ENCODE measurements at regions of chr4 and their contacts with region 1.

Region 1: GRCh38 chr4:151356510-151356909 is 31.1 kb upstream of the SH3D19 start:
- DNase-seq: peak; percentile 63
- H3K4me3 ChIP-seq: no peak overlapping the region
- H3K27ac ChIP-seq: no peak overlapping the region
- H3K4me1 ChIP-seq: peaks cover 20% of the 10 kb centered on the region
- H3K27me3 ChIP-seq: no peaks in the 10 kb centered on the region
- CTCF ChIP-seq: no peak

Region 2: DNA sequence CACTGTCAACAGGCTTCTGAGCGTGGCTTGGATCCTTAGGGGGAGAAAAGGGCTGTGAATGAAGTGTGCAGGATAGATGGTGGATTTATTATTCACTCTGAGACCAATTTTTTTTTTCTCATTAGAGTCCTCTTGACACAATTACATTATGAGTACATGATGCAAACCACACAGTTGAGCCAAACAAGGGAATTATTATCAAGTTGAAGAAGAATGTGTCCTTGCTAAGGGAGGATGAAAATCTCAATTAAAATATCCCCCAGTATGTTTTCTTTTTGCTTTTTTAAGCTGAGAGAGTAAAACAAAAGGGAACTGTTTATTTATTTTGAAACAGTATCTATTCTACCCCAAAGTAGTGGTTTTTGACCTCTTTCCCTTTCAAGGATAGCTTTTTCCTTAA is 216.7 kb before region 1 on chr4:
- CTCF ChIA-PET with region 1: no interaction called
- dilution Hi-C with region 1: no loop called
- in situ Hi-C with region 1: loop called in 1 of 2 experiments (anchors 25 kb)
- intact Hi-C with region 1: loop called (anchors 5 kb)
- DNase-seq: no peak
- H3K4me3 ChIP-seq: no peak overlapping the region
- H3K27ac ChIP-seq: no peak overlapping the region
- H3K4me1 ChIP-seq: no peaks in the 10 kb centered on the region
- H3K27me3 ChIP-seq: no peaks in the 10 kb centered on the region
- CTCF ChIP-seq: no peak

Region 3: GRCh38 chr4:151310124-151310728 is 46.3 kb before region 1 on chr4:
- CTCF ChIA-PET with region 1: no interaction called
- dilution Hi-C with region 1: no loop called
- in situ Hi-C with region 1: no loop called
- intact Hi-C with region 1: no loop called
- DNase-seq: no peak
- H3K4me3 ChIP-seq: no peak overlapping the region
- H3K27ac ChIP-seq: no peak overlapping the region
- H3K4me1 ChIP-seq: peaks cover 23% of the 10 kb centered on the region
- H3K27me3 ChIP-seq: no peaks in the 10 kb centered on the region
- CTCF ChIP-seq: no peak

Region 4: GRCh38 chr4:151340751-151341385 is 15.6 kb before region 1 on chr4:
- CTCF ChIA-PET with region 1: no interaction called
- dilution Hi-C with region 1: no loop called
- in situ Hi-C with region 1: no loop called
- intact Hi-C with region 1: no loop called
- DNase-seq: no peak
- H3K4me3 ChIP-seq: no peak overlapping the region
- H3K27ac ChIP-seq: no peak overlapping the region
- H3K4me1 ChIP-seq: no peaks in the 10 kb centered on the region
- H3K27me3 ChIP-seq: no peaks in the 10 kb centered on the region
- CTCF ChIP-seq: no peak

Measured in mammary epithelial cell (primary cell).